PC-9 (cell line): ENCODE measurements at regions of chr3 and their contacts with region 1.

Region 1: GRCh38 chr3:194296454-194297263 is 54.5 kb downstream of the CPN2 start:
- DNase-seq: peak; percentile 94 to 98
- H3K4me3 ChIP-seq: peak overlapping the region; percentile 57
- H3K27ac ChIP-seq: peak overlapping the region; percentile 97
- H3K4me1 ChIP-seq: peaks cover 65% of the 10 kb centered on the region
- H3K27me3 ChIP-seq: no peaks in the 10 kb centered on the region
- CTCF ChIP-seq: peak; percentile 30; the same call in 1 of the 2 replicates

Region 2: DNA sequence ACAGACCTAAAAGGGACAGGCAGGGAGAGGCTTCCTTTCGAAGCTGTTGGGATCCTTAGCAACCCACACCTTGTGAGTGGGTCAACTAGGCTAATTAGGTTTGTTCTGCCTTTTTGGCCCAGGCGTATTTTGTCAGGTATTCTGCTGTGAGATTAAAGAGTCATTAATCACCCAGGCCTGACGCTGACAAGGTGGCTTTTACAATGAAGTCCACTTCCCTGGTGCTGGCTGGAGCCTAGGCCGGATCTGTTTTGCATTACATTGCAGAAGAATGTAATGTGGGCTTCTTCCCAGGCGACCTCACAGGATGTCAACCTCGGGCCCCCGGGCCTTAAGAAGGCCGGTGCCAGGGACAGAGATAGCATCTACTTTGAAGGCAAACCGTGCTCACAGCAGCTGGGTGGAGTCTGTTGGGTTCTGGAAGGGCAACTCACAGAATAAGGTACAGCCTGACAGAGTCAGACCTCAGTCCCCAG is 83.8 kb before region 1 on chr3:
- CTCF ChIA-PET with region 1: no interaction called
- POLR2A ChIA-PET with region 1: no interaction called
- intact Hi-C with region 1: loop called (anchors 1 kb)
- DNase-seq: peak; percentile 93 to 97
- H3K4me3 ChIP-seq: no peak overlapping the region
- H3K27ac ChIP-seq: peak overlapping the region; percentile 49
- H3K4me1 ChIP-seq: peaks cover 27% of the 10 kb centered on the region
- H3K27me3 ChIP-seq: no peaks in the 10 kb centered on the region
- CTCF ChIP-seq: no peak

Region 3: GRCh38 chr3:194323785-194324735 is 27.4 kb after region 1 on chr3:
- CTCF ChIA-PET with region 1: interaction called, 8 read pairs
- POLR2A ChIA-PET with region 1: interaction called, 4 read pairs
- intact Hi-C with region 1: loop called (anchors 2 kb)
- DNase-seq: peak; percentile 60 to 72
- H3K4me3 ChIP-seq: no peak overlapping the region
- H3K27ac ChIP-seq: peak overlapping the region; percentile 98
- H3K4me1 ChIP-seq: peaks cover 39% of the 10 kb centered on the region
- H3K27me3 ChIP-seq: no peaks in the 10 kb centered on the region
- CTCF ChIP-seq: no peak